ENCODE measurements at regions of chr6 and their contacts with region 1.

Region 1: DNA sequence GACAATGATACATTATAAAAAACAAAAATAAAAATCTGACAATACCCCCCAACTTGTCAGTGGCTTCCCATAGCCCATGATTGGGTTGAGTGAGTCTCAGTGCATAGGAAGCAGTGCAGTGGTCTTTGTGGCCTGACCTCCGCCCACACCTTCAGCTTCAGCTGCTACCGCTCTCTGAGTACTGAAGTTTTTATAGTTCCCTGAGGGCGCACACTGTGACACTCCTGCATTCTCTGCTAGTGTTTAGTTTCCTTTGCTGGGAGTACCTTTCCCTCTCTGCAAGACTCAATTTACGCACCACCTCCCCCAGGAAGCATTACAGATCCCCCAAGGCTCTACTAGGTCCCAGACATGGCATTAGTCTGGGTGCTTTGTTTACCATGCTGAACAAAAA is 441.0 kb downstream of the UTRN start:
- DNase-seq: no peak
- H3K4me3 Mint-ChIP-seq: no peak overlapping the region
- H3K27ac Mint-ChIP-seq: peak overlapping the region; percentile 60
- H3K4me1 Mint-ChIP-seq: peaks cover 41% of the 10 kb centered on the region
- H3K27me3 Mint-ChIP-seq: no peaks in the 10 kb centered on the region

Region 2: GRCh38 chr6:144659202-144660182 is 66.6 kb before region 1 on chr6:
- intact Hi-C with region 1: loop called (anchors 5 kb)
- DNase-seq: no peak
- H3K4me3 Mint-ChIP-seq: peak overlapping the region; percentile 9
- H3K27ac Mint-ChIP-seq: peak overlapping the region; percentile 74
- H3K4me1 Mint-ChIP-seq: peaks cover 28% of the 10 kb centered on the region
- H3K27me3 Mint-ChIP-seq: no peaks in the 10 kb centered on the region

Region 3: DNA sequence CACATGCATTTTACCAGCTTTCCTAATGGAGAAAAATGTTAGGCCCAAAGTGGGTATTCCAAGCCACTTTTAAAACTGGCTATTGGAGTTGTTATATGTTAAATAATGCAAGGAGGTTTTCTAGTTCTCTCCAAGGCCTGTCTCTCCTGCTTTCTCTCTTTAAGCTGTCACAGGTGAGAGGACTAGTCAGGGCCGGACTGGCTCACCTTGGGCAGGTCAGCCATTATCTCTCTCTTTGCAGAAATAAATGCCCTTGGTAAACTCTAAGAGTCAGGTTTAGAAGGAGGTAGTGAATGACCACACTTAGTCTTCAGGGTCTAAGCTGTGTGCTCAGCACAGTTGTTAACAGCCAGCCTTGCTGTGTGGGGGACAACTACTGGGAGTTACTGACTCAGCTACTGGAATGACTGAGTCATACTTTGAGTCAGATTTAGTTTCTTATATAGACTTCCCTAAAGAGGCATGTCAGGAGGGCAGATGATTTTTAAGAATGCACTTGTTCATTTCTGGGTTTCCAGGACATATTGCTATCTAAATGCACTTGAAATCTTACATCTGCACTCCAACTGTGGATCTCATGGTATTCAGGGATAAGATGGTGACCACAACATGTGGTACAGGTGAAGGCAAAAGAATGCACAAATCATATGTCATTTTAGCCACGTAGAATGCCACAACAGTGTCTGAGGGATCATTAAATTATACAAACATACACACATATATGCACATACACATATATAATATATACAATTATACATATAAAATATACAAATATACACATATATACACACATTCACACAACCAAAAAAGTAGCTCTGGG is 289.8 kb after region 1 on chr6:
- intact Hi-C with region 1: loop called (anchors 10 kb)
- DNase-seq: peak; percentile 14
- H3K4me3 Mint-ChIP-seq: no peak overlapping the region
- H3K27ac Mint-ChIP-seq: peak overlapping the region; percentile 70
- H3K4me1 Mint-ChIP-seq: peaks cover 47% of the 10 kb centered on the region
- H3K27me3 Mint-ChIP-seq: no peaks in the 10 kb centered on the region

Measured in activated T-helper 2 cell treated with anti-CD3 and anti-CD28 coated beads, Interferon-gamma antibody, Interleukin-2, Interleukin-4, amounts not matched to agents 10 μg/mL and 5 μg/mL and 100 μg/mL, durations not matched to agents 14 hours and 24 hours and 36 hours (primary cell).